ENCODE measurements at regions of chr10 and their contacts with region 1.

Region 1: DNA sequence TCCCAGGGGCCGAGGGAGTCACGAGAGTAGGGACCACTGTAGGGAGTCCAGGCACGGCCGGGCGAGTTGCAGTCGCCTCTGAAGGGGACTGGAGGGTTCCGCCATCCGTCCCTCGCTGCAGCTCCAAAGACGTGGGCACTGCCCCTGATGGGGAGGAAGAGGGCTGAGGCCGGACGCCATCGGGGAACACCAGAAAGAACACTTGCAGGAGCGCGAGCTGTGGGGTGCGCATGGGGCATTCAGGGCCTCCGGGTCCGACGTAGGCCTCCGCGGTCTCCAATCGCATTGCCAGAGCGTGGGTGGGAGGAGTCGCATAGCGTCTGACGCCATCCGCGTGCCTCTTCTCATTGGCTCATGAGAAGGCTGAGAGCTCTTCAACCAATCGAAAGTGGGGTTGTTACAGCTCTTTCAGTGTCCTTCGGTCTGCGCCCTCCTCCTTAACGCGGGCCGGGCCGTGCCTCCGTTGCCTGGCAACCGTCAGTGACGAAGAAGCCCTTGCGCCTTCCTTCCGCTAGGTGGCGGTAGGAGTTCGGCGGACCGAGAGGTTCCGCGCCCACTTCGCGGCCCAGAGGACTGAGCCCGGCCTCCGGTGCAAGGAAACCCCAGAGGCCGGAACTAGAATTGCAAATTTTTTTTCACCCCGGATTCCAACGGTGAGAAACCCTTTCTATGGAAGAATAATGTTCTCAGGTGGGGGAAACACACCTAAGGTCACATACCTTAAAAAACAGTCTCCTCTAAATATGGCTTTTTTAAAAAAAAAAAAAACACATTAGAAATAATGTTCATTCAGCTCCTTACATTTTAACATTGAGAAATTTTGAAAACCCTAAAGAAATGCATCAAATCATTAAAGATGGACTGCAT is at the start of gene TCTN3:
- DNase-seq: peak; percentile 100
- H3K4me3 ChIP-seq: peak within 1 kb of the TSS; percentile 73 to 93 (median 74)
- H3K27ac ChIP-seq: peak within 1 kb of the TSS; percentile 84
- H3K4me1 ChIP-seq: peaks cover 9% of the 10 kb centered on the region
- H3K27me3 ChIP-seq: no peaks in the 10 kb centered on the region
- CTCF ChIP-seq: peak; percentile 96 to 99
- total RNA-seq, gene TCTN3: 31.8 to 45.2 TPM

Region 2: DNA sequence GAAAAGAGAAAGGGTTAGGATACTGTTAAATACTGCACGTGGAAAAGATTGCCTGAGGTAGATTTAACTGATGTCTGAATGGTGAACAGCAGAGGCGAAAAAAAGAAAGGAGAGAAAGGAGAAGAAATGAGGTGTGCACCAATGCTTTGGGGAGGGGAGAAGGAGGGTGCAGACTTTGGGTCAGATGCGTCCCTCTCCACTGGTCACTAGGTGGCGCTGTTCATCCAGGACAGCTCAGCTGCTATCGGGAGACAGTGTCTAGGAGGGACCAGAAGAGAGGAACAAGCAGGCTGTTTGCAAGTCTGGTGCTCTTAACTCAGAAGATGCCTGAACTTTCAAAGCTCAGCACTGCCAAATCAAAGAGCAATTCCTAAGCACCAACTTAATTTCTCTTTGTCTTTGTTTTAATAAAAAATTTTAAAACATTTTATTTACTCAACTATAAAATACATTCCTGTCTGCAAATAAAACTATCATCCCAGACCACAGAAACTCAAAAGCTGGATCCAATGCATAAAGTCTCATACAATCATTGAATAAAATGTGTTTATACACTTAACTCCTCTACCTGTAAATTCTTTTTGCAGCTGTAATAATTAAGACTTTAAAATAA is 319.2 kb before region 1 on chr10:
- CTCF ChIA-PET with region 1: no interaction called
- dilution Hi-C with region 1: no loop called
- in situ Hi-C with region 1: no loop called
- intact Hi-C with region 1: loop called (anchors 5 kb)
- DNase-seq: peak; percentile 68
- H3K4me3 ChIP-seq: no peak overlapping the region
- H3K27ac ChIP-seq: no peak overlapping the region
- H3K4me1 ChIP-seq: no peaks in the 10 kb centered on the region
- H3K27me3 ChIP-seq: no peaks in the 10 kb centered on the region
- CTCF ChIP-seq: peak; percentile 95 to 99

Region 3: GRCh38 chr10:95656291-95657164 is 37.4 kb before region 1 on chr10 and contains the start of gene ALDH18A1:
- CTCF ChIA-PET with region 1: interaction called, 3 read pairs
- dilution Hi-C with region 1: no loop called
- in situ Hi-C with region 1: no loop called
- intact Hi-C with region 1: loop called (anchors 1 kb)
- DNase-seq: peak; percentile 82
- H3K4me3 ChIP-seq: peak within 1 kb of the TSS; percentile 62 to 93 (median 91)
- H3K27ac ChIP-seq: peak within 1 kb of the TSS; percentile 38
- H3K4me1 ChIP-seq: peaks cover 10% of the 10 kb centered on the region
- H3K27me3 ChIP-seq: no peaks in the 10 kb centered on the region
- CTCF ChIP-seq: no peak
- total RNA-seq, gene ALDH18A1: 70.9 to 87.2 TPM

Region 4: DNA sequence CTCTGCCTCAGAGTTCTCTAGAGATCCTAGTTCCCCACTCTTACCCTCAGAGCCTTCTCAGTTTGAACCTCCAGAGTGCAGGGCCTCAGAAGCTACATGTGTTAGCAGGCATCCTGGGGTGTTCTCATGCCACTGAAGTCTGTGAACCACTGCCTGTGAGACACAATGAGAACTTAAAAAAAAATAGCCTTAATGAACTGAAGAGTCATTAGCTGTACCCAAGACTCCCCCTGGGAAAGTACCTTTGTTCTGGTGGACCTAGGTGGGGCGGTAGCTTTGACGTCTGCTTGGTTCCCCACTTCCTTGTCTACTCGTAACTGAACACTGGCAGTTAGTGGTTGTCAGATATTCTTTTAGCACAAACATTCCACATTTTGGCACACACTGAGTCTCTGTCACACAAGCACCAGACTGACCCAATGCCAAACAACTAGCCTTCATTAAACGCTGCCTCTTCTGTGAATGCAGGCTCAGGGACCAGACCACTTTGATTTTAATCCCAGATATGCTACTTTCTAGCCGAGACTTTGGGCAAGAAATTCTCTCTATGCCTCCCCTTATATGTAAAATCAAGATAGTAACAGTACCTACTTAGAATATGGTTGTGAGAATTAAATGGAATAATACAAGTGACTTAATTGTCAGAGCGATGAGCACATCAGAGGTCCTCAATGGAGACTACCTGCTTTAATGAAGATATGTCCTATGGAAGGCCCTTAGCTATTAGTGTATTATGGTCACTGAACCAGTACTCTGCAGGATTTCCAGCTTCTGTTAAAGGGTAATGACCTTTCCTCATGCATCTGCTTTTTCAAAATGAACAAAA is 138.5 kb after region 1 on chr10:
- CTCF ChIA-PET with region 1: interaction called, 7 read pairs
- dilution Hi-C with region 1: no loop called
- in situ Hi-C with region 1: loop called in 1 of 2 experiments (anchors 10 kb)
- intact Hi-C with region 1: no loop called
- DNase-seq: no peak
- H3K4me3 ChIP-seq: no peak overlapping the region
- H3K27ac ChIP-seq: no peak overlapping the region
- H3K4me1 ChIP-seq: no peaks in the 10 kb centered on the region
- H3K27me3 ChIP-seq: no peaks in the 10 kb centered on the region
- CTCF ChIP-seq: no peak

Region 5: DNA sequence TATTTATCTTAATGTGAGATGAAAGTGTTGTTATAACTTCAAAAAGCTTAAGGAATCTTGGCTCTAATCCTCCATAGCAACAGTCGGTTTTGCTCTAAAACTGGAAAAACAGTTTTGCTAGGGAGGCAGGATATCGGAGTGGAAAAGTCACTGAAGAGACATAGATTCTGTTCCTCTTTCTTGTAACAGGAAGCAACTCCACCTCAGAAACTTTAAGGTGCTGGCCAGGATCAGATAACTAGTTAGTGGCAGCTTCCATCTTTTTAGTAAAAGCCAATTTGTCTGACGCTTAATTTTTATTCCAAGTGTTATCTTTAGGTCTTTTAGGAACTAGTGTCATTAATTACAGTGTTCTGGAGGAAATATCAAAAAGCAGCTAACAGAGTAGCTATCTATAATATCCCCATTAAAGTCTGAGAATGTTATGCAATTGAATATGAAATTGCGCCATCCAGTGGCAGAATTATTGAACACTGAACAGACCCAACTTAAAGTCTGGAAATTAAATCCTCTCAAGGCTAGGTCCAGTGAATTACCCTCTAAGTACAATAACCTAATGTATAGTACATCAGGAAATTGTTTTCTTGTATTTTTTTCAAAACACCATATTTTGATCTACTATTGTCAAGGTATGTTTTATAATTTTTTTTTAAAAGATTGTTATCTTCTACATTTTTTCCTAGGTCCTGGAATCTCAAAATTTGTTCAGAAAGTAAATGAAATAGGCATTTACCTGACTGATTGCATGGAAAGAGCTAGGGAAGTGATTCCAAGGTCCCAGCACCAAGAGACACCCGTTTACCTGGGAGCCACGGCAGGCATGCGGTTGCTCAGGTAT is 148.0 kb after region 1 on chr10:
- CTCF ChIA-PET with region 1: interaction called, 39 read pairs
- dilution Hi-C with region 1: no loop called
- in situ Hi-C with region 1: loop called (anchors 10 kb)
- intact Hi-C with region 1: loop called (anchors 1 kb)
- DNase-seq: peak; percentile 40
- H3K4me3 ChIP-seq: no peak overlapping the region
- H3K27ac ChIP-seq: no peak overlapping the region
- H3K4me1 ChIP-seq: no peaks in the 10 kb centered on the region
- H3K27me3 ChIP-seq: peaks cover 3% of the 10 kb centered on the region
- CTCF ChIP-seq: peak; percentile 52 to 72

Region 6: DNA sequence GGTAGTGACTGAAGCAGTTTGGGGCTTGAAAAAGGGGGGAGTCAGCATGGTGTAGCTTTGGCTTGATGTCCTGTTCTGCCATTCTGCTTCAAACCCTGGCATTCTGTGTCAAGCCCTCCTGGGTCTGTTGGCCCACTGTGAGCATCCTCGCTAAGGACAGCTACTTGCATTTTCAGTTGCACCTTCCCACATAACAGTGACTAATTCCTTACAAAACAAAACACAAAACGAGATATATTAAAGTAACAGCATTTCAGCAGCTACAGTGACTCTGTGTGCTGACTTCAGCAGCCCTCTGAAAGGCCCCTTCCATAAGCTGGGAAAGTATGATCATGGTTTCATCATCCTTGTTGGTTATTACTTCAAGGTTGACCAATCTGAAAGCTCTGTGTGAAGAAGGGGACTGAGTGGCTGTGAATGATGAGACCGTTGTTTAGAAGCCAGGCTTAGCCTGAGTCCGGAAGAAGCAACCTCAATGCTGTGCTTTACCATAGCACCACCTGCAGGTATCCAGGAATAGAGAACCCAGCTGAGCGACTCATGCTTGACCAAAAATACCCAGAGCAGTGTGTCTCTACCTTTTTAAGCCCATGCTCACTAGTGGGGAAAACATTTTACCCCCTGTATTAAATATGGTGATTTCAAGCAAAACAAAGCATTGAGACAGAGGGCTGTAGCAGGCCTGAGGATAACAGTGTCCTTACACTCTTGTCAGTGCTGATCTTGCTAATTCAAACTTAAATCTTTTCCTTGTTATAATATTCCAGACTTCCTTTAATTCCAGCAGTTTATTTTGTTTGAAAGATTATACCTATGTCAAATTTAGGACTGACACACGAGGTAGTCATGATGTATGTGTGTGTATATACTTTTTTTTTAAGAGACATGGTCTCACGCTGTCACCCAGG is 171.3 kb after region 1 on chr10:
- CTCF ChIA-PET with region 1: interaction called, 10 read pairs
- dilution Hi-C with region 1: no loop called
- in situ Hi-C with region 1: no loop called
- intact Hi-C with region 1: loop called (anchors 1 kb)
- DNase-seq: peak; percentile 59
- H3K4me3 ChIP-seq: no peak overlapping the region
- H3K27ac ChIP-seq: no peak overlapping the region
- H3K4me1 ChIP-seq: no peaks in the 10 kb centered on the region
- H3K27me3 ChIP-seq: no peaks in the 10 kb centered on the region
- CTCF ChIP-seq: peak; percentile 50 to 71

Region 7: DNA sequence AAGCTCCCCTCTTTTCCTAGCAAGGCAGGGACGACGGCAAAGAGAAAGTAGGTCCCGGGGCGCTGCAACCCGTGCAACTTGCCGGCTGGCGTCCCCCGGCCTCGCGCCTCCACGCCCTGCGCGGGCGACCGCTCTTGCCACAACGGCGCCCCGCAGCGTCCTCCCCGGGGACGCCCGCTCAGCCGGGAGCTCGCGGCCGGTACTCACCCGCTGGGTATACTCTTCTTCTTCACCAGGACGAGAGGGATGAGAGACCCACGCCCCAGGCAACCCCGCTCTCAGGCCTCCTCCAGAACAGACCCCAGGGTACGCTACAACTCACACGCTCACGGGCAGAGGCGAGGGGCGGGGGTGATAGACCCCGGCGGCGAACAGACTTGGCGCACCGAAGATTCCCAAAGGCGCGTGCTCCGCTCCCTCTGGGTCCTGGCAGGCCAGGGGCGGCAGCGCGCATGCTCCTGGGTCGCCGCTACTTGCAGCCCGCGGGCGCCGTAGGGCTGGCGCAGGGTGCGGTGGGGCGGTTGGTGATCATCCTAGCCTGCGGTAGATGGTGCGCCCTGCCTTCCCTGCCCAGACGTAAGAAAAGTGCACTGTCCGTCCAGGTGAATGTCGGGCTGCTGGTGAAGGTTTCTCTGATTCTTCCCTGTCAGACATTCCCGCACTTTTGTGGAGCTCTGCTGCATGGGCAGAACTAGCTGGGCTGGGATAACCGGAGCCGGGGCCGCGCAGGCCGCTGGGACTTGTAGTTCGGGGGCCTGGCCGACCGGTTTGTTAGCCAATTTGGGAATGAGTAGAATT is 213.8 kb after region 1 on chr10 and contains the start of gene CC2D2B:
- CTCF ChIA-PET with region 1: interaction called, 8 read pairs
- dilution Hi-C with region 1: no loop called
- in situ Hi-C with region 1: no loop called
- intact Hi-C with region 1: loop called (anchors 5 kb)
- DNase-seq: peak; percentile 82
- H3K4me3 ChIP-seq: peak within 1 kb of the TSS; percentile 77 to 83 (median 83)
- H3K27ac ChIP-seq: peak within 1 kb of the TSS; percentile 38
- H3K4me1 ChIP-seq: peaks cover 6% of the 10 kb centered on the region
- H3K27me3 ChIP-seq: no peaks in the 10 kb centered on the region
- CTCF ChIP-seq: peak in 1 of 2 donors; percentile 25
- total RNA-seq, gene CC2D2B: 0.33 TPM in 1 of 2 donors, not detected in the other